ENCODE measurements at regions of chr7 and their contacts with region 1.

Region 1: DNA sequence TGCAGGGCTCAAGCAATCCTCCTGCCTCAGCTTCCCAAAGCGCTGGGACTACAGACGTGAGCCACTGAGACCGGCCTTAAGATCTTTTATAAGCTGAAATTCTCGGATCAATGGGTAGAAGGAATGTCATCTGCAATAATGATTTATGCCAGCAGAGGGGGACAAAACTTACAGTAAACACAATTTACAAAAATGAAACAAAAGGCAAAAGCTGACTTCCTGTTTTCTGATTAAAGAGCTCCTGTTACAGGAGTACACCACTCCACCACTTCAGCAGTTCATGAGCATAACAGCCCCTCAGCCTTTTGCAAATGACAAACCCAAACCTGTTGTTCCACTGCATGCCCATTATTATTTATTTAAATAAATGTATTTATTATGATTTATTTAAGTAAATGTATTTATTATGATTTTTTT is 88.5 kb upstream of the ATP6V0A4 start:
- DNase-seq: peak; percentile 66 to 75
- H3K4me3 ChIP-seq: no peak overlapping the region
- H3K4me1 ChIP-seq: peaks cover 20% of the 10 kb centered on the region
- H3K27me3 ChIP-seq: no peaks in the 10 kb centered on the region

Region 2: GRCh38 chr7:139075031-139075652 is 188.6 kb after region 1 on chr7:
- in situ Hi-C with region 1: loop called (anchors 10 kb)
- DNase-seq: peak; percentile 63 to 74
- H3K4me3 ChIP-seq: no peak overlapping the region
- H3K4me1 ChIP-seq: no peaks in the 10 kb centered on the region
- H3K27me3 ChIP-seq: no peaks in the 10 kb centered on the region

Measured in HAP-1 (cell line).